Calu3 (cell line): ENCODE measurements at regions of chr14 and their contacts with region 1.

Region 1: DNA sequence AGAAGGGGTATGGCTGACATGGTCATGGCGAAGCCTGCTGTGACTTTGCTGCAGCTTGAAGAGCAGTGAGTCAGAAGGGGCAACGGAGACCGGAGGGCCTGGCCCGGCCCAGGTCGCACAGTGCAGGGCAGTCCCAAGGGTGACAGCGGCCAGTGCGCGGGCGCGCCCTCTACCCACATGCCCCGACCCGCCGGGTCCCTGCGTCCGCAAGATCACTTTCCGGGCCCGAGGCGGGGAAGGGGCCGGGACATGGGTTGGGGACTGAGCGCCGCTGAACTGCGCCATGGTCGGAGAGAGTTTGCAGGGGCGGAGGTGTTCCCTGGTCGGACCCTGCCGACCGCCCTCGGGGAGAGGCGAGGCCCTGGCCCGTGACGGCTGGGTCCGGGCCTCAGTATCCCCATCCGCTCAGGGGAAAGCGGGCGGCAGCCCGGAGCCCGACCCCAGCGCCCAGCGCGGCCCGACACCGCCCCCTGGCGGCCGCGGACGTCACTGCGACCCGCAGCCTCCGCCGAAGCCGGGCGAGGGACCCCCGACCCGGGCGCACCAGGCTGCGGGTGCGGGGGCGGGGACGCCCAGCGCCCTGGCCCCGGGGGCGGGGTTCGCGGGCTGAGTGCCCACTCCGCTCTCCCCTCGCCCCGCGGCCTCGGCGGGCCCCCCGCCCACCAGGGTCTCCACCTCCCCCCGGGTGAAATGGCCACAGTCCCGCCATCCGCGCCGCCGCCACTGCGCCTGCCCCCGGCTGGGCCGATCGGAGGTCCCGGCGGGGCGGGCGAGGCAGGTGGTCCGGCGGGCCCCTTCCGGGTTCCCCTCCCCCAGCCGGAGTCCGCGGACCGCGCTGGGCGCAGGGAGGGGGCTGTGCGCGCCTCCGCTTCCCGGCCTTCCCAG is 7.2 kb upstream of the ANKRD9 start:
- DNase-seq: peak; percentile 74
- H3K4me3 Mint-ChIP-seq: peak overlapping the region; percentile 73
- H3K27ac Mint-ChIP-seq: peak overlapping the region; percentile 77
- H3K4me1 Mint-ChIP-seq: no peaks in the 10 kb centered on the region
- H3K27me3 Mint-ChIP-seq: no peaks in the 10 kb centered on the region
- CTCF ChIP-seq: peak; percentile 90

Region 2: GRCh38 chr14:102437997-102438915 is 78.5 kb before region 1 on chr14:
- CTCF ChIA-PET with region 1: interaction called, 16 read pairs
- intact Hi-C with region 1: loop called (anchors 5 kb)
- DNase-seq: peak; percentile 89
- H3K4me3 Mint-ChIP-seq: peak overlapping the region; percentile 37
- H3K27ac Mint-ChIP-seq: no peak overlapping the region
- H3K4me1 Mint-ChIP-seq: no peaks in the 10 kb centered on the region
- H3K27me3 Mint-ChIP-seq: no peaks in the 10 kb centered on the region
- CTCF ChIP-seq: peak; percentile 79